Pancreas (tissue), 10 donors: ENCODE measurements at regions of chr2 and their contacts with region 1.

Region 1: DNA sequence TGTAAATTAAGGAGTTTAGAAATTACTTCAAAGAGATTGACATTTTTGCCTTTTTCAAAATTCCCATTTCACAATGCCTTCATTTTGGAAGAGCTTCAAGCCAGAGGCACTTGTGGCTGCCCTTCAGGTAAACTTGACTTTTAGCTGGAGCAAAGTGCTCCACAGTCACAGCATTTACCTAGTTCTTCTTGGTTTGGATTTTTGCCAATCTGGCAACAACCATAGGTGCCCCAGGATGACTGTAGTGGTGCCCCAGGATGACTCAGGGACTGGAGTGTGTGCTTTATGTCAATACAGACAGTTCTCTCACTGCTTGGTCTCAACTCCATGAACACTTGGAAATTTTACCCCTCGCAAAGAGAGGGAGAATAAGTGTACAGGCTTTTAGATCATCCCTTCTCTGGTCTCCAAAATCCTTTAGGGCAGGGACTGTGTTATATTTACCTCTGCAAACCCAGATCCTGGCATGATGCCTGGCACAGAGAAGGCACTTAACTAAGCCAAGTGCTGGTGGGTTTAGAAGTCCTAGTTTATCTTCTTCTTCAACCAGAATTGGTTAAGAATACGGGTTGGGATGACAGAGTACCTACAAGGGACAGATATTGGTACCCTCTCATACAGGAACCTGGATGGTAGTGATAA is 15.3 kb upstream of the PTPN4 start:
- DNase-seq: peak in 1 of 6 donors; percentile 54
- ATAC-seq: peak; percentile 77 to 85 (median 80)
- H3K4me3 ChIP-seq: no peak overlapping the region
- H3K27ac ChIP-seq: no peak overlapping the region
- H3K4me1 ChIP-seq: no peaks in the 10 kb centered on the region
- H3K27me3 ChIP-seq: no peaks in the 10 kb centered on the region
- CTCF ChIP-seq: no peak

Region 2: GRCh38 chr2:119598596-119599263 is 145.7 kb before region 1 on chr2:
- intact Hi-C with region 1: no loop called
- DNase-seq: peak in 3 of 6 donors; percentile 38 to 57 (median 45)
- ATAC-seq: peak; percentile 94 to 97 (median 97)
- H3K4me3 ChIP-seq: no peak overlapping the region
- H3K27ac ChIP-seq: peak overlapping the region in 2 of 4 donors; percentile 67 to 77
- H3K4me1 ChIP-seq: peaks cover 0 to 14% (median 13%) of the 10 kb centered on the region in 3 donors
- H3K27me3 ChIP-seq: no peaks in the 10 kb centered on the region
- CTCF ChIP-seq: no peak

Region 3: DNA sequence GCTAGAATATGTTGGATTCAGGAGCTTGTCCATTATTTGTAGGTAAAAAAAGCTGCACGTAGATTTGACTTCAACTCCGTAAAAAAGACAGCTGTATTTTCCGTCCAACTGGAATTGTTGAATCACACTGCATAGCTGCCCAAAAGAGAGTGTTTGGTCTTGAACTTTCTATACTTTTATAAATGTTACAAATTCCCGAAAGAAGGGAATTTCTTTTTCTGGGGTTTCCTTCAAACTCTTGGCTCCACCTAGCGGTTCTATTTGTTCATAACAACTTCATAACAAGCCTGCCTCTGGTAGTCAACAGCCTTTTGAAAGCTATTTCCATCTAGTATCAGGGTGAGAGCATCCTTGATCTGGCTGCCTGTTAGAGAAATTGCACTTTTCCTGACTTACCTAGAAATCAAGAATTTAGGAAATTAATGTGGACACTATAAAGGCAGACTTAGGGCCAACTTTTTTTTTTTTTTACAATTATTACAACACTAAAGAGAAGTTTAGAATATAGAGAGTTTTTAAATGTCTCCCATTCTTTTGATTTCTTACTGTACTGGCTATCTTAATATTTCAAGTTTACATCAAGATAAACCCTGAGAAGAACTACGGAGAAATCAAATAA is 430.7 kb after region 1 on chr2:
- intact Hi-C with region 1: loop called in 1 of 3 experiments (anchors 10 kb)
- DNase-seq: peak in 1 of 6 donors; percentile 31
- ATAC-seq: peak; percentile 56 to 84 (median 78)
- H3K4me3 ChIP-seq: no peak overlapping the region
- H3K27ac ChIP-seq: no peak overlapping the region
- H3K4me1 ChIP-seq: no peaks in the 10 kb centered on the region
- H3K27me3 ChIP-seq: no peaks in the 10 kb centered on the region
- CTCF ChIP-seq: peak; percentile 37 to 72 (median 40)